CD8-positive, alpha-beta T cell (primary cell): ENCODE measurements at regions of chr3 and their contacts with region 1.

Region 1: GRCh38 chr3:107421170-107421792 is 44.0 kb downstream of the CCDC54 start:
- DNase-seq: peak in 2 of 9 experiments; percentile 57 to 71
- ATAC-seq: peak; percentile 49
- H3K4me3 ChIP-seq: no peak overlapping the region
- H3K4me3 Mint-ChIP-seq: peak overlapping the region; percentile 57
- H3K27ac ChIP-seq: no peak overlapping the region
- H3K27ac Mint-ChIP-seq: no peak overlapping the region
- H3K4me1 ChIP-seq: no peaks in the 10 kb centered on the region
- H3K4me1 Mint-ChIP-seq: peaks cover 3% of the 10 kb centered on the region
- H3K27me3 ChIP-seq: peaks cover 0 to 5% of the 10 kb centered on the region in 2 experiments
- H3K27me3 Mint-ChIP-seq: peaks cover 7% of the 10 kb centered on the region
- CTCF ChIP-seq: no peak

Region 2: DNA sequence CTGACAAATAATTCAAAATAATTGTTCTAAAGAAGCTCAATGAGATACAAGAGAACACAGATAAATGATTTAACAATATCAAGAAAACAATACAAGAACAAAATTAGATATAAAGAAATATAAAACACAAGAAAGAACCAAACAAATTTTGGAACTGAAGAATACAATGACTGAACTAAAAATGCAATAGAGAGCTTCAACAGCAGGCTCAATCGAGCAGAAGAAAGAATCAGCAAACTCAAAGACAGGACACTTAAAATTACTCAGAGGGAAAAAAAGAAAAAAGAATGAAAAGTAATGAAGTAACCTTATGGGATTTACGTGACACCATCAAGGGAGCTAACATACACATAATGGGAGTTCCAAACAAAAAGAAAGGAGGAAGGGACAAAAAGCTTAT is 11.9 kb before region 1 on chr3:
- CTCF ChIA-PET with region 1: interaction called, 19 read pairs
- POLR2A ChIA-PET with region 1: no interaction called
- intact Hi-C with region 1: no loop called
- DNase-seq: no peak
- ATAC-seq: no peak
- H3K4me3 ChIP-seq: no peak overlapping the region
- H3K4me3 Mint-ChIP-seq: no peak overlapping the region
- H3K27ac ChIP-seq: no peak overlapping the region
- H3K27ac Mint-ChIP-seq: no peak overlapping the region
- H3K4me1 ChIP-seq: no peaks in the 10 kb centered on the region
- H3K4me1 Mint-ChIP-seq: peaks cover 5% of the 10 kb centered on the region
- H3K27me3 ChIP-seq: no peaks in the 10 kb centered on the region
- H3K27me3 Mint-ChIP-seq: no peaks in the 10 kb centered on the region
- CTCF ChIP-seq: no peak